Heart left ventricle (tissue), 16 donors: ENCODE measurements at regions of chr17 and their contacts with region 1.

Region 1: DNA sequence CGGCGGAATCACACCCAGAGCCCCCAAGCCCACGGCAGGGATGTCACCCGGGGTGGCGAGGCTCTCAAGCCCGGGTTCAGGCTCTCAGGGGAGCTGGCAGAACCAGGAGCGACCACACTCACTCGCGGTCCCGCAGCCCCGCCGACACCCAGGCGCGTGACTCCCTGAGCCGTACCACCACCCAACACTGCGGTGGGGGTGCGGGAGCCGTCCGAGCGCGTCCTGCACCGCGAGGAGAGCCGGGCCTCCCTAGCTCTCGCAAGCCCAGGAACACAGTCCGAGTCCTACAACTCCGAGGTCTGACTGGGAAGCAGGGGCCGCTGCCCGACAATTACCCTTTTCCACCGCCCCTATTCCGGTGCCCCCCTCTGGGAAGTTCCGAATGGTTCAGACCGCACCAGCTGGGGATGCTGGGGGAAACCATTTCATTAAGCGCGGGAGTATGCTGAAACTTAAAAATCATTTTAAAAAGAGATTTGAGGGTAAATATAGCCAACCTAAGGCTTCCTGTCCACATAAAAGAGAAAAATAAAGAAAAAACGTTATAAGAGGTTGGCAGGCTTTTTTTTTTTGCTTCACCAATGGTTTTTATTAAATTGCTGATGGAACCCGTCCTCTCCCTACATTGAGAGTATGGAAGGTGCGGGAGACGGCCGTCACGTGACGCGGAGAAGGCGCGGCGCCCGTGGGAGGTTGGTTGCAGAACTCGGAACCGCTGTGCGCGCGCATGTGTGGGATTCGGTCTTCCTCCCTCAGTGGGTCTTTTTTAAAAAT is at the start of gene FLCN:
- DNase-seq: peak; percentile 93 to 96 (median 93)
- ATAC-seq: peak; percentile 90 to 96 (median 94)
- H3K4me3 ChIP-seq: peak within 1 kb of the TSS; percentile 77 to 100 (median 96)
- H3K27ac ChIP-seq: peak within 1 kb of the TSS; percentile 92 to 99 (median 94)
- H3K4me1 ChIP-seq: peaks cover 0 to 50% (median 29%) of the 10 kb centered on the region in 12 donors
- H3K27me3 ChIP-seq: no peaks in the 10 kb centered on the region
- CTCF ChIP-seq: no peak
- POLR2A ChIP-seq: peak in 1 of 2 donors; percentile 79
- total RNA-seq, gene FLCN: 26.5 to 120 (median 32.6) TPM

Region 2: DNA sequence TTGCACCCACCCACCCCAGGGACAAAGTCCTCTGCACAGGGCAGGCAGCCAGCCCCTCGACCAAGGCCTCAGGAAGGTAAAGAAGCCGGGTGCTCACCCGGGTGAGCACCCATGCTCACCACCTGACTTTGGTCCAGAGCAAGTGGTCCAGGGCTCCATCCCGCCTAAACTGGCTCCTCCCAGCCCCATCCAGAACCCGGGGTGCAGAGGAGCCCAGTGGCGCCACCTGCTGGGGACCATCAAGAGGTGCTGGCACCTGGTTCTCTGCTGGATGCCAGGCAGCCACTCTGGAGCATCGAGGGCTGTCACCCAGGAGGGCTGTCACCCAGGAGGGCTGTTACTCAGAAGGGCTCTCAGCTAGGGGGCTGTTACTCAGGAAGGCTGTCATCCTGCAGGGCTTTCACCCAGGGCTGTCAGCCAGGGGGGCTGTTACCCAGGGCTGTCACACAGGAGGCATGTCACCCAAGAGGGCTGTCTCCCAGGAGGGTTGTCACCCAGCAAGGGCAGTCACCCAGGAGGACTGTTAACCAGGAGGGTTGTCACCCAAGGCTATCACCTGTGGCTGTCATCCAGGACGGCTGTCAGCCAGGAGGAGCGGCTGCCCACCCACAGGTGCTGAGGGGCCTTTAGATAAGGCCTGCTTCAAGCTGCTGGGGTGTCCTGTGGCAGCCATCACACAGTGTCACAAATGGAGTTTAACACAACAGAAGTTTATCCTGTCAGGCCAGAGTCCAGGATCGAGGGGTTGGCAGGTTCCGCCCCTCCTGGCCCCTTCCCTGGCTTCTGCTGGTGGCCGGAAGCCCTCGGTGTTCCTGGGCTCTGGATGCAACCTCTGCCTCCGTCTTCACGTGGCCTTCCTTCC is 363.8 kb before region 1 on chr17:
- intact Hi-C with region 1: no loop called
- DNase-seq: no peak
- ATAC-seq: peak in 1 of 4 donors; percentile 29
- H3K4me3 ChIP-seq: no peak overlapping the region
- H3K27ac ChIP-seq: no peak overlapping the region
- H3K4me1 ChIP-seq: no peaks in the 10 kb centered on the region
- H3K27me3 ChIP-seq: no peaks in the 10 kb centered on the region
- CTCF ChIP-seq: peak in 11 of 12 donors; percentile 15 to 52 (median 41)
- POLR2A ChIP-seq: no peak

Region 3: DNA sequence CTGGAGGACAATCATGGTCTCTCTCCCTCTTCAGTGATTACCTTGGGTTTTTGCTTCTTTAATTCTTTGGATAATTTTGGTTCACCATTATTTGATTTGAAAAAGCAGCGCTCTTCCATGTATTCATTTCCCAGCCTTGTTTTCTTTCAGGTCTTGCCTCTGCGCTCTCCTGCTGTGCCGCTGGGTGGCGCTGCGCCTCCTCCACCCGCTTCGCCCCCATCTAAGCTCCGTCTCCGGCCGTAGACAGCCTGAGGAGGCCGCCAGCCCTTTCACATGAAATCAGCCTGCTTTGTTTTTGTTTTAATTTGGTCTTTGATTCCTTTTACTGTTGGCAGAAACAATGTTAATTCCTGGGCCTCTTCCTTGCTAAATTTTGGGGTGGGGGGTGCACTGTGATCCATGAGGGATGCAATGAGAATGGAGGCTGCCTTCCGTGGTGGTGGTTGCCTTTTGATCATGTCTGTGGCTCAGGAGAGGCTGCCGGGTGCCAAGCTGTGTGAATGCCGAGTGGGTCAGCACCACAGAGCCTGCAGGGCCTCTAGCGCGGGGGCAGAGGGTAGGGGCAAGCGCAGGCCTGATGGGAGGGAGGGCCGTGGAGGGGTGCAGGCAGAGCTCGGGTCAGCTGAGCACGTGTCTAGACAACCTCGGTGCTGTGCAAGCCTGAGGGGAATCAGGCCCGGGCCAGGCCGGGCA is 95.2 kb before region 1 on chr17:
- intact Hi-C with region 1: loop called in 1 of 10 experiments (anchors 10 kb)
- DNase-seq: no peak
- ATAC-seq: peak in 2 of 4 donors; percentile 48 to 55
- H3K4me3 ChIP-seq: no peak overlapping the region
- H3K27ac ChIP-seq: peak overlapping the region in 7 of 12 donors; percentile 15 to 46 (median 25)
- H3K4me1 ChIP-seq: peaks cover 0 to 44% (median 20%) of the 10 kb centered on the region in 12 donors
- H3K27me3 ChIP-seq: no peaks in the 10 kb centered on the region
- CTCF ChIP-seq: peak; percentile 71 to 88 (median 78)
- POLR2A ChIP-seq: no peak

Region 4: GRCh38 chr17:17151962-17152361 is 85.3 kb before region 1 on chr17:
- intact Hi-C with region 1: loop called in 3 of 10 experiments (anchors 5 to 10 kb)
- DNase-seq: peak; percentile 84 to 95 (median 91)
- ATAC-seq: peak; percentile 92 to 97 (median 95)
- H3K4me3 ChIP-seq: no peak overlapping the region
- H3K27ac ChIP-seq: peak overlapping the region; percentile 35 to 90 (median 82)
- H3K4me1 ChIP-seq: peaks cover 12 to 45% (median 27%) of the 10 kb centered on the region in 12 donors
- H3K27me3 ChIP-seq: no peaks in the 10 kb centered on the region
- CTCF ChIP-seq: no peak
- POLR2A ChIP-seq: no peak

Region 5: GRCh38 chr17:17164676-17165075 is 72.5 kb before region 1 on chr17:
- intact Hi-C with region 1: loop called in 1 of 10 experiments (anchors 5 kb)
- DNase-seq: peak in 1 of 5 donors; percentile 44
- ATAC-seq: no peak
- H3K4me3 ChIP-seq: no peak overlapping the region
- H3K27ac ChIP-seq: no peak overlapping the region
- H3K4me1 ChIP-seq: peaks cover 0 to 15% (median 0%) of the 10 kb centered on the region in 12 donors
- H3K27me3 ChIP-seq: no peaks in the 10 kb centered on the region
- CTCF ChIP-seq: no peak
- POLR2A ChIP-seq: no peak

Region 6: GRCh38 chr17:17171991-17172939 is 64.9 kb before region 1 on chr17:
- intact Hi-C with region 1: loop called in 1 of 10 experiments (anchors 5 kb)
- DNase-seq: peak; percentile 75 to 85 (median 79)
- ATAC-seq: peak; percentile 64 to 91 (median 72)
- H3K4me3 ChIP-seq: no peak overlapping the region
- H3K27ac ChIP-seq: peak overlapping the region in 11 of 12 donors; percentile 7 to 79 (median 46)
- H3K4me1 ChIP-seq: peaks cover 0 to 40% (median 19%) of the 10 kb centered on the region in 12 donors
- H3K27me3 ChIP-seq: no peaks in the 10 kb centered on the region
- CTCF ChIP-seq: no peak
- POLR2A ChIP-seq: no peak

Region 7: DNA sequence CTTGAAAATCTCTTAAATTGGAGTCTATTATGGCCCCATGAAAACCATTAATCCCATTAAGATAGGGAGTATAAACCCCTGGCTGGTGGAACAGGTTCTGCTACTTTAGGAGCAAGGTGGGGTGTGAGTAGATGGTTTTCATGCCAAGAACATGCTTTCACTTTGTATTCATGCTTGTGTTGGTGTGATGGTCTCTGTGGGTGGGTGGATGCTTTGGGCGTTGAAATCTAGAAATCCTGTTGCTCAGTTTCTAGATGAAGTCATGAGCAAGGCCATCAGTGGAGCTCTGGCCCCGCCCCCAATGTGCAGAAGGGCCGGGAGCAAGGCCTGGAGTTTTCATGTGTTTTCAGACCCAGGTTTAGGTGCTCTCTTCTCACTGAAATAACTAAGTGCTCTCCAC is 51.2 kb before region 1 on chr17:
- intact Hi-C with region 1: loop called in 1 of 10 experiments (anchors 10 kb)
- DNase-seq: no peak
- ATAC-seq: no peak
- H3K4me3 ChIP-seq: no peak overlapping the region
- H3K27ac ChIP-seq: peak overlapping the region in 4 of 12 donors; percentile 19 to 53 (median 41)
- H3K4me1 ChIP-seq: peaks cover 0 to 80% (median 52%) of the 10 kb centered on the region in 12 donors
- H3K27me3 ChIP-seq: no peaks in the 10 kb centered on the region
- CTCF ChIP-seq: no peak
- POLR2A ChIP-seq: no peak

Region 8: DNA sequence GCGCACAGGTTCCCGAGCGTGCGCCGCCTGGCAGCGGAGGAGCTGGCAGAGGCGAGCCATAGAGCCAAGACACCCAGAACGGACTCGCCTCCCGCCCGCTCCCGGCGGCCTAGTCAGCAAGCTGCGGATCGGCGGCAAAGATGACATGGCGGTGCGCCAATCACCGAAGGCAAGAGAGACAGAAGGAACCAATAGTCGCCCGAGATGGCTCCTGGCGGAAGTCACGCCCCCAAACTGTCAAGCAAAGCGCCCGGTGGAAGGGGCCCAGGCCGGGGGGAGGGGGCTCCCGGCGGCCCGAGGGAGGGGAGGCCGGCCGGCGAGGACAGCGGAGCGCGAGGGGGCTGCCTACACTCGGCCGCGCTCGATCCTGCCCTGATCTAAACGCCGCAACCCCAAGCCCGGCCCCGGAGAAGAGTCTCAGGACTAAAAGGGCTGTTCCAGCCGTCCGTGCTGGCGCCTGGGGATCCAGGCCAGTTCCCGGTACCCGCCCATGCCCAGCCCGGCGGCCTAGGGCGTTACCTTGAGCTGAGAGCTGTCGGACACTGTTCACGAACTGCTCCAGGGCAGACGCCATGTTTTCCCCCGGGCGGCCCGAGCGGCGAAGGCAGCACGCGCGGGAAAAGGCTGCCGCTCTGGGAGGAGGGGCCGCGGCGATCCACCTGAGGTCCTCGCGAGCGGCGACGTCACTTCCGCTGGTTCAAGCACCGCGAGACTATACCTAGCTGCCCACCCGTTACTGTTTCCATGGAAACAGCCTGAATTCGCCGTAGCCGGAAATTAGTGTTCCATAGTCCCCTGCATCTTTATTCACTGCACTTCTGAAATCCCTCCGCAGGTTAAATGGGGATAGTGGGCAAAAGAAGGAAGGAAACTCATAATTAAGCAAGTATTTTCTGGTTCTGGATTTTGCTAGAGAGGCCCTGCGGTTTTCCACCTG is 43.7 kb after region 1 on chr17 and contains the start of gene COPS3:
- intact Hi-C with region 1: loop called in 1 of 10 experiments (anchors 5 kb)
- DNase-seq: peak; percentile 99
- ATAC-seq: peak; percentile 93 to 97 (median 97)
- H3K4me3 ChIP-seq: peak within 1 kb of the TSS; percentile 65 to 100 (median 92)
- H3K27ac ChIP-seq: peak within 1 kb of the TSS; percentile 94 to 99 (median 98)
- H3K4me1 ChIP-seq: peaks cover 5 to 46% (median 24%) of the 10 kb centered on the region in 12 donors
- H3K27me3 ChIP-seq: no peaks in the 10 kb centered on the region
- CTCF ChIP-seq: peak in 2 of 12 donors; percentile 13 to 20
- POLR2A ChIP-seq: peak in 1 of 2 donors; percentile 64
- total RNA-seq, gene COPS3: 65.8 to 87.7 (median 74.0) TPM